ENCODE measurements at regions of chr10 and their contacts with region 1.

Region 1: DNA sequence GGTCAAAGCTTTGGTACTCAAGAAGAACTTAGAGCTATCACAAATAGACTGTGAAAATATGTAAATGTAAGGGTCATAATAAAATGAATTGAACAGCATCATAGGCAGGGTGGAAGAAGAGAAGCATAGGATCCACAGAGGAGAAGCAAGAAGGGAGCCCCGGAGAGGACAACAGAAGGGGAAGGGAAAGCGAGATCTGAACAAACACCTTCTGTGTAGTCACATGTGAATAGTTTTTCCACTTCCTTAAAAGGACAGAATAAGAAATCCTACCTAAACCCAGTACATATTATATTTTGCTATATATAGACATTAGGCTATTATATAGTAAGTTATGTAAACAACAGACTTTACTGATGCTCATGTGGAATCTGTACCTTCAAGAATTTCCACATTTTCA is 160.2 kb downstream of the DKK1 start:
- DNase-seq: no peak
- ATAC-seq: no peak
- H3K4me3 ChIP-seq: no peak overlapping the region
- H3K27ac ChIP-seq: no peak overlapping the region
- H3K4me1 ChIP-seq: no peaks in the 10 kb centered on the region
- H3K27me3 ChIP-seq: no peaks in the 10 kb centered on the region
- CTCF ChIP-seq: no peak
- POLR2A ChIP-seq: no peak

Region 2: GRCh38 chr10:52071814-52072213 is 402.5 kb before region 1 on chr10:
- intact Hi-C with region 1: no loop called
- DNase-seq: no peak
- ATAC-seq: no peak
- H3K4me3 ChIP-seq: no peak overlapping the region
- H3K27ac ChIP-seq: no peak overlapping the region
- H3K4me1 ChIP-seq: no peaks in the 10 kb centered on the region
- H3K27me3 ChIP-seq: no peaks in the 10 kb centered on the region
- CTCF ChIP-seq: no peak
- POLR2A ChIP-seq: no peak

Region 3: GRCh38 chr10:52319926-52320325 is 154.3 kb before region 1 on chr10:
- intact Hi-C with region 1: loop called in 1 of 2 experiments (anchors 10 kb)
- DNase-seq: no peak
- ATAC-seq: no peak
- H3K4me3 ChIP-seq: no peak overlapping the region
- H3K27ac ChIP-seq: no peak overlapping the region
- H3K4me1 ChIP-seq: no peaks in the 10 kb centered on the region
- H3K27me3 ChIP-seq: no peaks in the 10 kb centered on the region
- CTCF ChIP-seq: no peak
- POLR2A ChIP-seq: no peak

Region 4: GRCh38 chr10:52437205-52437646 is 37.0 kb before region 1 on chr10:
- intact Hi-C with region 1: no loop called
- DNase-seq: no peak
- ATAC-seq: no peak
- H3K4me3 ChIP-seq: no peak overlapping the region
- H3K27ac ChIP-seq: no peak overlapping the region
- H3K4me1 ChIP-seq: no peaks in the 10 kb centered on the region
- H3K27me3 ChIP-seq: no peaks in the 10 kb centered on the region
- CTCF ChIP-seq: no peak
- POLR2A ChIP-seq: no peak

Region 5: DNA sequence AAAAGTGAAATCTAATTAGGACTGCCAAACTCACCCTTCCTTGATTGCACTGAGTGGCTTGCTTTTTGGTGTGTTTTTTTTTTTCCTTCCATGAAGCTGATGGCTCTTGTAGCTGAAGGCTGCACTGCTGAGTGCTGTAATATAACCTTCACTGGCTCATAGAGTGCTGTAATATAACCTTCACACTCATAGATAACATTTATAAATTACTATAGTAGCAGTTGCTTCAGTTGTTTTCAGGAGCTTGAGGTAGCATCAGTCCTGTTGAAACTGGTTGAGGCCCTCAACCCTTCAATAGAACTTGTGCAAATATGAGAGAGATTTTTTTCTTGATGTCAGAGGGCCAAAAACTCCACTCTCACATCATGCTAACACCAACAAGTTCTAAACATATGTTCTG is 703.2 kb after region 1 on chr10:
- intact Hi-C with region 1: no loop called
- DNase-seq: no peak
- ATAC-seq: no peak
- H3K4me3 ChIP-seq: no peak overlapping the region
- H3K27ac ChIP-seq: no peak overlapping the region
- H3K4me1 ChIP-seq: no peaks in the 10 kb centered on the region
- H3K27me3 ChIP-seq: no peaks in the 10 kb centered on the region
- CTCF ChIP-seq: no peak
- POLR2A ChIP-seq: no peak